Head of caudate nucleus (tissue), 42 donors: ENCODE measurements at regions of chr10 and their contacts with region 1.

Region 1: DNA sequence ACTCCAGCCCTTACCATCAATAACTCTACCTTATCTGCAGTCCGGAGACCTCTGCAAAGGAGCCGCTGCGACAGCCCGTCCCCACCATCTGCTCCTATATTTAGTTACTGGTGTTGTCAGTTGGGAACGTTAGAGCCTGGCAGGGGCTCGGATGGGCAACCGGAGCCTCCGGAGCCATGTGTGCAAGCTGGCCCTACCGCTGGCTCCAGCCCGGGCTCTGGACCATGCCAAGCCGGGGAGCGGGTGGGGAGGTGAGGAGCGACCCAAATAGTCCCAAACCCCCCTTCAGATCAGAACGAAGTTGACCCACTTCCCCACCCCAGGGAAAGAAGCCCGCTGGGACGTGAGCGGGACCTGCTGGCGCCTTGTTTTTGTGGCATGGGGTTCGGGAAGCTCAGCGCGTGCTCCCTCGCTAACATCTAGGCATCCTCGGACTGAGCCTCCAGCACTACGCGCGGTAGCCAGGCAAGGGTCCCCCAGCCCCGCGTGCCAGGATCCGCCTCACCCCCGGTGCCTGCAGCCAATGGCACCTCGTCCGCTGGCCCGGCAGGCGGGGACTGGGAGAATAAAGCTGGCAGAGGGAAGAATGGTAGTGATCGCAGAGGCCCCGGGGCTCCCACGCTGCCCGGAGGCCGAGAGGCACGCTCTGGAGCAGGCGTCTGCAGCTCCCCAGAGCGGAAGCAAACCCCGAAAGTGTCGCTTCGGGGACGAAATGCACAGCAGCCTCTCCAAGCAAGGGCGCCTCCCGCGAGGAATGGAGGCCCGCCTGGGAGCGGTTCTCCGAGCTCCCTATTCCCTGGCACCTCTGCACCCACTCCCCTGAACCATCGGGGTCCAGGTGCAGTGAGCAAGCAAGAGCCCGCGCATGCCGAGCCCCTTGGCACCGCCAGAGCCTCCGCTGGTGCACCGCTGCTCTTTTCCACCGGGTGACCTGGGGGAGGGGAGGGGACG is 679 bp downstream of the LRRC20 start:
- DNase-seq: peak in 41 of 42 donors; percentile 25 to 78 (median 62)

Region 2: DNA sequence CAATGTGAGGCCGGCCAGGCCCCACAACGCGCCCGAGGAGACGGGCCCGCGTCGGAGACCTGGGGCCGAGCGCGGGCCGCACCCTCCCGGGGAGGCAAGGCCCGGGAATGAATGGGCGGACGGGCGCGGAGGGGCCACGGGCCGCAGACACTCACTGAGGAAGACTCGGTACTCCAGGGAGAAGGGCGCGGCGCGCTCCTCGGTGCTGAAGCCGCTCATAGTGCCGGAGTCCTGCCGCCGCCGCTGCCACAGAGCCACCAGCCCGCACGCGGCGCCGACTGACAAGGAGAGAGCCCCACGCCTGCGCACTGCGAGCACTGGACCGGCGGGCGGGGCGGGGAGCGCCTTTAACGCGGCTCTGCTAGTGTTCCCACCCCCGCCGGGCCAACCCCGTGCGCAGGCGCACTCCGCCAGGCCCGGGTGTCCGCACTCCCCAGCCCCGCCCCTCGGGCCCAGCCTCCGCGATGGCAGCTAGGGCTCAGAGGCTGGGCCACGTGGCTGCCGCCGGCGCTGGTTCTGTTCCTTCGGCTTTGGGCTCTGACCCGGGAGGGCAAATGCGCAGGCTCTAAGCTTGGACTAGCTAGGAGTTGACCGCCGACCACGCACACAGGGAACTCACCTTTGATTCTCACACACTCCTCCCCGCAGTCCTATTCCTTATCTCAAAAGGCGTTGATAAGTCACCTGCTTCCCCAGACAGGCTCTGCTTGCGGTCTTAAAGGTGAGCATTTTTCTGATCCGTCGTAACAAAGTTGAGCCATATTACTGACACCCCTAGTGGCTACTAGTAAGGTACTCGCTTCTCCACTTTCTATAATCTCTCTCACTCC is 148.4 kb before region 1 on chr10 and contains the start of gene PPA1:
- intact Hi-C with region 1: loop called (anchors 5 kb)
- DNase-seq: peak; percentile 97 to 100 (median 99)

Region 3: GRCh38 chr10:70404036-70404786 is 22.5 kb after region 1 on chr10 and contains the start of gene EIF4EBP2:
- intact Hi-C with region 1: loop called (anchors 2 kb)
- DNase-seq: peak; percentile 96 to 100 (median 99)